ENCODE measurements at regions of chr10 and their contacts with region 1.

Region 1: DNA sequence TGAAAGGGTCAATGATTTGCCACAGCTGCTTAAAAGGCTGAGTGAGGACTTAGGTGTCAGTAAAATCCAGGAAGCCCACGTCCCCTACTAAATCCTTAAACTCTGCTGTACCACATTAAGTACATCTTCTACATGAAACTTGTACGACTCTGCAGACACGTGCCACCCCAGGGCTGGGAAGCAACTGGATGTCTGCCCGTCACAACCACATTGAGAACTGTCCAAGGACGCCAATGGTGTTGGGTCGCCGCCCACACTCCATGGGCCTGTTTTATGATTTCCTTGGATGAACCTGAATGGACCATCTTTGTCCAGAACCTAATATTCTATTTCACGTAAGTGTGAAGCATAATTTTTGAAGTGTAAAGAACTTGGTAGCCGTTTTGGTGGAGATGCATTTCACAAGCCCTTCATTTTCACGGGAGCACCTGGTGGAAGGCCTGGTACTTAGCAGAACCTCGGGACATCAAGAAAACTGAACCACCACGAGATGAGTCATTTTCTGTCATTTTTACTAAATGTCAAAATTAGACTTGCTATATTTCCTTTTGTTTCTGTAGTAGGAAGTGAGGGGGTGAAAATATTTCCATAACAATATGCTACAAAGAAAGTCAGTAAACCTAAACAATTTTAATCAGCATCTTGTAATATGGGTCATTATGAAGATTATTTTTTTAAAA is 134.9 kb downstream of the SFMBT2 start:
- DNase-seq: no peak
- ATAC-seq: no peak
- H3K4me3 ChIP-seq: no peak overlapping the region
- H3K4me3 Mint-ChIP-seq: no peak overlapping the region
- H3K27ac ChIP-seq: no peak overlapping the region
- H3K27ac Mint-ChIP-seq: peak overlapping the region; percentile 58
- H3K4me1 ChIP-seq: peaks cover 31% of the 10 kb centered on the region
- H3K4me1 Mint-ChIP-seq: peaks cover 61% of the 10 kb centered on the region
- H3K27me3 ChIP-seq: no peaks in the 10 kb centered on the region
- H3K27me3 Mint-ChIP-seq: no peaks in the 10 kb centered on the region
- CTCF ChIP-seq: no peak

Region 2: GRCh38 chr10:7054900-7055299 is 221.0 kb before region 1 on chr10:
- CTCF ChIA-PET with region 1: no interaction called
- POLR2A ChIA-PET with region 1: no interaction called
- intact Hi-C with region 1: no loop called
- DNase-seq: peak in 1 of 14 experiments; percentile 10
- ATAC-seq: no peak
- H3K4me3 ChIP-seq: no peak overlapping the region
- H3K4me3 Mint-ChIP-seq: no peak overlapping the region
- H3K27ac ChIP-seq: no peak overlapping the region
- H3K27ac Mint-ChIP-seq: no peak overlapping the region
- H3K4me1 ChIP-seq: no peaks in the 10 kb centered on the region
- H3K4me1 Mint-ChIP-seq: no peaks in the 10 kb centered on the region
- H3K27me3 ChIP-seq: no peaks in the 10 kb centered on the region
- H3K27me3 Mint-ChIP-seq: peaks cover 5% of the 10 kb centered on the region
- CTCF ChIP-seq: no peak

Region 3: DNA sequence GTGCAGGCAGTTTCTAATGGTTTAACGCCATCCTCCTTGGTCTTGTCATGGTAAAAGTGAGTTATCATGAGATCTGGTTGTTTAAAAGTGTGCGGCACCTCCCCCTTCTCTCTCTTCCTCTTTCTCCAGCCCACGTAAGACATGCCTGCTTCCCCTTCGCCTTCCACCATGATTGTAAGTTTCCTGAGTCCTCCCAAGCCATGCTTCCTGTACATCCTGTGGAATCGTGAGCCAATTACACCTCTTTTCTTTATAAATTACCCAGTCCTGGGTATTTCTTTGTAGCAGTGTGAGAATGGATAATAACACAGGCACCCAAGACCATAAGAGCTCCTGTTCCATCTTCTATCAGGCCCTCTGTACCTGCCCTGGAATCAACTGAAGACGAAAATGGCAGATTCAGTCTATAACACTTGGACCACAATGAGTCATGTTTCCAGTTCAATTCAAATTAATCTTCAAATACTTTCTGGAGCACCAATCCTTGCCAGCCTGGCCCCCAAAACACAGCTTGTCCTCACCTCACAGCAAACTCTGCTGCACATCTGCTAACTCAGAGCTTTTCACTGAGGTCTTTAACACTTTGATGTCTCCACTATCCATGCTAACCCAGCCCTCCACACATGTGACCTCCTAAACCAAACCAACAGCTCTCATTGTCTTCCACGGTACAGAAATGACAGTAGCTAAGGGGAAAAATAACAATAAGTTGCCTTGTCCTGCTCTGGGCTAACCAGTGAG is 61.7 kb after region 1 on chr10:
- CTCF ChIA-PET with region 1: no interaction called
- POLR2A ChIA-PET with region 1: no interaction called
- intact Hi-C with region 1: loop called in 1 of 2 experiments (anchors 10 kb)
- DNase-seq: peak in 2 of 14 experiments; percentile 10 to 27
- ATAC-seq: no peak
- H3K4me3 ChIP-seq: no peak overlapping the region
- H3K4me3 Mint-ChIP-seq: no peak overlapping the region
- H3K27ac ChIP-seq: no peak overlapping the region
- H3K27ac Mint-ChIP-seq: peak overlapping the region; percentile 29
- H3K4me1 ChIP-seq: no peaks in the 10 kb centered on the region
- H3K4me1 Mint-ChIP-seq: peaks cover 85% of the 10 kb centered on the region
- H3K27me3 ChIP-seq: no peaks in the 10 kb centered on the region
- H3K27me3 Mint-ChIP-seq: no peaks in the 10 kb centered on the region
- CTCF ChIP-seq: no peak

Measured in CD4-positive, alpha-beta T cell (primary cell).